Spleen (tissue), 13 donors: ENCODE measurements at regions of chr10 and their contacts with region 1.

Region 1: GRCh38 chr10:72692057-72692910 is at the start of gene MCU:
- DNase-seq: peak; percentile 98
- H3K4me3 ChIP-seq: peak within 1 kb of the TSS; percentile 50 to 92 (median 68)
- H3K27ac ChIP-seq: peak within 1 kb of the TSS; percentile 78 to 98 (median 96)
- H3K4me1 ChIP-seq: peaks cover 9 to 54% (median 38%) of the 10 kb centered on the region in 6 donors
- H3K27me3 ChIP-seq: no peaks in the 10 kb centered on the region
- CTCF ChIP-seq: no peak
- POLR2A ChIP-seq: peak in 2 of 3 donors; percentile 49 to 75
- total RNA-seq, gene MCU: 17.0 to 29.2 (median 25.3) TPM

Region 2: GRCh38 chr10:72625608-72626443 is 66.5 kb before region 1 on chr10 and contains the start of gene MICU1:
- intact Hi-C with region 1: loop called (anchors 10 kb)
- DNase-seq: peak; percentile 99
- H3K4me3 ChIP-seq: peak within 1 kb of the TSS; percentile 73 to 94 (median 86)
- H3K27ac ChIP-seq: peak within 1 kb of the TSS; percentile 67 to 93 (median 87)
- H3K4me1 ChIP-seq: peaks cover 0 to 39% (median 23%) of the 10 kb centered on the region in 6 donors
- H3K27me3 ChIP-seq: no peaks in the 10 kb centered on the region
- CTCF ChIP-seq: peak in 2 of 11 experiments; percentile 18 to 31
- POLR2A ChIP-seq: peak in 2 of 3 donors; percentile 36 to 37
- total RNA-seq, gene MICU1: 44.9 to 58.4 (median 48.5) TPM

Region 3: DNA sequence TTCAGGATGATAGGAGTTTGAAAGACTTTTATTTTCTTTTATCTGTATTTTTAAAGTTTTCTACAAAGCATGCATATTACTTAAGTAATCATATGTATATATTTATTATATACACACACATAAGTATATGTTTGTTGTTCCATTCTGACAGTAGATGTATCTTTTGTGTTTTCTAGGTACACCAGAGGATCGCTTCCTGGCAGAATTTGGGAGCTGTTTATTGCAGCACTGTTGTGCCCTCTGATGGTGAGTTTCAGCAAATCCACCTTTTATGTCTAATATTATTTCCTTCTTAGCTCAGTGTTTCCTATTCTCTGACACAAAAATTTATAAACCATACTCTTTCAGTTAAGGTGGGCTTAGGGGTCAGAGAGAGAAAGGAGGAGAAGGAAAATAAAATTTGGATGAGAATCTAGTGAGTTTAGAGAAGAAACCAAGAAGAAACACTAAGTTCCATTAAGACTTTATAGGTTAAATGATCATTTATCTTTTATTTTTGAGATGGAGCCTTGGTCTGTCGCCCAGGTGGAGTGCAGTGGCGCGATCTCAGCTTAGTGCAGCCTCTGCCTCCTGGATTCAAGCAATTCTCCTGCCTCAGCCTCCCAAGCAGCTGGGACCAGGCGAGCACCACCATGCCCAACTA is 142.0 kb after region 1 on chr10:
- intact Hi-C with region 1: loop called (anchors 5 kb)
- DNase-seq: no peak
- H3K4me3 ChIP-seq: no peak overlapping the region
- H3K27ac ChIP-seq: no peak overlapping the region
- H3K4me1 ChIP-seq: peaks cover 0 to 32% (median 17%) of the 10 kb centered on the region in 6 donors
- H3K27me3 ChIP-seq: no peaks in the 10 kb centered on the region
- CTCF ChIP-seq: peak; percentile 32 to 75 (median 48)
- POLR2A ChIP-seq: no peak